Calu3 (cell line): ENCODE measurements at regions of chrX and their contacts with region 1.

Region 1: DNA sequence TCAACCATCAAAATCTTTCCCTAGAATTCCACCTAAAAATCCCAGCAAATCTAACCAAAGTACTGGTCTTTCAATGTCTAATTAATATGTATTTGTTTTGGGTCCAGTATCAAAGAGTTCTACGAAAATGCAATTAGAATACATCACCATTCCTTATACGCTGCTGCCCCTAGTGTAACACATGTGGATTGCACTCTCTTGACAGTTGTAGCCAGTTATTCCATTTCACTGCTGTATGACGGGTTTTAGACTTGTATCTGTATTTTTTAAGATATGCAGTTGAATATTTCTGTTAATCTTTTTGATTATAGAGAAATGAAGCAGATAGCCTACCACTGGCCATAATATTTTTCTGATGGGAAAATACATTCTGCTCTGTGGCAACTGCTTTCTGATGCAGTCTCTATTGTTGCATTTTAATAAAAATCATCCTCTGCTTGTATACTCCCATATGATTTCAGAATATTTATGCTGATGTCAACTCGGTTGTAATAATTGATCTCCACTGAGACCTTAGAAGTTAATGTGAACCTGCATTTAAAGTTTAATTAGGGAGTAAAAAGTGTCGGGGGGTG is 17.1 kb upstream of the PAGE2B start:
- DNase-seq: peak; percentile 22
- H3K4me3 Mint-ChIP-seq: no peak overlapping the region
- H3K27ac Mint-ChIP-seq: no peak overlapping the region
- H3K4me1 Mint-ChIP-seq: peaks cover 8% of the 10 kb centered on the region
- H3K27me3 Mint-ChIP-seq: no peaks in the 10 kb centered on the region
- CTCF ChIP-seq: peak; percentile 65

Region 2: GRCh38 chrX:54248309-54248708 is 809.5 kb before region 1 on chrX:
- CTCF ChIA-PET with region 1: no interaction called
- intact Hi-C with region 1: loop called (anchors 5 kb)
- DNase-seq: no peak
- H3K4me3 Mint-ChIP-seq: no peak overlapping the region
- H3K27ac Mint-ChIP-seq: no peak overlapping the region
- H3K4me1 Mint-ChIP-seq: no peaks in the 10 kb centered on the region
- H3K27me3 Mint-ChIP-seq: peaks cover 12% of the 10 kb centered on the region
- CTCF ChIP-seq: peak; percentile 16

Region 3: GRCh38 chrX:54639346-54640102 is 418.2 kb before region 1 on chrX:
- CTCF ChIA-PET with region 1: interaction called, 4 read pairs
- intact Hi-C with region 1: loop called (anchors 5 kb)
- DNase-seq: peak; percentile 91
- H3K4me3 Mint-ChIP-seq: peak overlapping the region; percentile 74
- H3K27ac Mint-ChIP-seq: peak overlapping the region; percentile 89
- H3K4me1 Mint-ChIP-seq: peaks cover 24% of the 10 kb centered on the region
- H3K27me3 Mint-ChIP-seq: no peaks in the 10 kb centered on the region
- CTCF ChIP-seq: peak; percentile 53

Region 4: GRCh38 chrX:54891573-54891972 is 166.2 kb before region 1 on chrX:
- CTCF ChIA-PET with region 1: interaction called, 3 read pairs
- intact Hi-C with region 1: loop called (anchors 1 kb)
- DNase-seq: peak; percentile 21
- H3K4me3 Mint-ChIP-seq: no peak overlapping the region
- H3K27ac Mint-ChIP-seq: no peak overlapping the region
- H3K4me1 Mint-ChIP-seq: no peaks in the 10 kb centered on the region
- H3K27me3 Mint-ChIP-seq: peaks cover 11% of the 10 kb centered on the region
- CTCF ChIP-seq: no peak

Region 5: GRCh38 chrX:55142206-55142918 is 84.6 kb after region 1 on chrX:
- CTCF ChIA-PET with region 1: no interaction called
- intact Hi-C with region 1: no loop called
- DNase-seq: no peak
- H3K4me3 Mint-ChIP-seq: no peak overlapping the region
- H3K27ac Mint-ChIP-seq: no peak overlapping the region
- H3K4me1 Mint-ChIP-seq: peaks cover 15% of the 10 kb centered on the region
- H3K27me3 Mint-ChIP-seq: no peaks in the 10 kb centered on the region
- CTCF ChIP-seq: no peak